Activated CD8-positive, alpha-beta T cell treated with anti-CD3 and anti-CD28 coated beads for 36 hours (primary cell): ENCODE measurements at regions of chr19 and their contacts with region 1.

Region 1: DNA sequence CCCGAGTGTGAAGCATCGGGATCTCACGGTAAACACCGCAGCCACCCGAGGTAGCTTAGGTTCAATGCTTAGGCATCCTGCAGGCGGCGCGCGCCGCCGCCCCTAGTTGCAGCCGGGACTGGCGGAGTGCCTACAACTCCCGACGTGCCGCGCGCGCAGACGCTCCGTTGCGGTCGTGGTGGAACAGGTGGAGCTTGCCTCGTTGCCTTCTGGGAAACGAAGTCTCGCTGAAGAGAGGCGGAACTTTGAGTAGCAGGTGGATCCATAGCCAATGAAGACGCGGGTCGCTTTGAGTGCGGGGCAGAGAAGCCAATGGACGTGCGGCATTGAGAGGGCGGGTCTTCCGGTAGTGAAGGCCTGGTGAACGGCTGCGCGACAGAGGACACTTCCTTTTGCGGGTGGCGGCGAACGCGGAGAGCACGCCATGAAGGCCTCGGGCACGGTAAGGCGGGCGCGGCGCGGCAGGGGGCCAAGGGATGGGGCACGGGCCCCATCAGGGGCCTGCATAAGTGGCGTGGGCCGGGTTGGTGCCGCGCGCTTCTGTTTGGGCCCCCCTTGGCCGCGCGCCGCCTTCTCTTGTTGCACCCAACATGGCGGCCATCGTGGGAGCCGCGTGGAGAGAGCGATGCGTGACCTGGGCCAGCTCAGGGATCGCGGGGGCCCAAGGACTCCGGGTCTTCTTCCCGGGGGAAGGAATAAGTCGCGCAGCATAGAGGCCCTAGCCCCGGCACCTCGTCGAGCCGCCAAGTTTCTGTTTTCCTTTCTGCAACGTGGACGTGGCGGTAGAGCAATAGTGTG is at the start of gene RPL18A:
- DNase-seq: peak; percentile 99
- ATAC-seq: peak; percentile 94
- H3K4me3 Mint-ChIP-seq: peak within 1 kb of the TSS; percentile 82
- H3K27ac Mint-ChIP-seq: peak within 1 kb of the TSS; percentile 97
- H3K4me1 Mint-ChIP-seq: peaks cover 30% of the 10 kb centered on the region
- H3K27me3 Mint-ChIP-seq: no peaks in the 10 kb centered on the region
- CTCF ChIP-seq: peak; percentile 79
- total RNA-seq, gene RPL18A: 3,663 to 3,679 TPM

Region 2: DNA sequence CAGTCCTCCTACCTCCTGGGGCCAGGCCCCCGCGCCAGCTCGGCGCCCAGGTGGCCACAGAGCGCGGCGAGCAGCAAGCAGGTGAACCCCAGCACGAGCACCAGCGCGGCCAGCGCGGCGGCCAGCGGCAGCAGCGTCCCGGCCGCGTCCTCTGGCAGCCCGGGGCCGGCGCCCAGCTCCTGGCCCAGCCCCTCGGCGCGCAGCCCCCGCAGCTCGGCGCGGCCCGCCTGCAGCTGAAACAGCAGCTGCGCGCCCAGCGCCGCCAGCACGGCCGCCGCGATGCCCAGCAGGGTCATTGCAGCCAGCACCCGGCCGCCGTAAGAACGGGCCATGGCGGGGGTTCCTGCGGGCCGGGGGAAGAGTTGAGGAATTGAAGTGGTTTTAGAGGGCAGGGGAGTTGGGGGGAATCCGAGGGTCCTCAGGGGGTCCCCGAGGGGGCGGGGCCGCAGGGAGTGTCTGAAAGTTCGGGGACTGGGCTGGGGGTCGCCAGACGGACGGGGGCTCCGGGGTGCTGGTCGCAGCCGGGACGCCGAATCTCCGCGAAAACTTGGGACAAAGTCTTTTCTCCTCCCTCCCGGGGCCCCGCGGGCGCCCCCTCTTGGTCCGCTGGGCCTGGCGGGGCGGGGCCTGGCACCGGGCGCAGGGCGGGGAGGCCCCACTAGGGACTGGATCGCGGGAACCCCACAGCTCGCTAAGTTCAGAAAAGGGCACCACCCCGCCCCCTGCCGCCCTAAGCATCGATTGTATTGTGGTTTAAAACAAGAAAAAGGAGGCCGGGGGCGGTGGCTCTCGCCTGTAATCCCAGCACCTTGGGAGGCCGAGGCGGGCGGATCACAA is 411.4 kb before region 1 on chr19 and contains the start of gene TMEM221:
- CTCF ChIA-PET with region 1: no interaction called
- POLR2A ChIA-PET with region 1: no interaction called
- intact Hi-C with region 1: no loop called
- DNase-seq: peak; percentile 83
- ATAC-seq: peak; percentile 68
- H3K4me3 Mint-ChIP-seq: peak within 1 kb of the TSS; percentile 25
- H3K27ac Mint-ChIP-seq: no peak within 1 kb of the TSS
- H3K4me1 Mint-ChIP-seq: peaks cover 16% of the 10 kb centered on the region
- H3K27me3 Mint-ChIP-seq: peaks cover 17% of the 10 kb centered on the region
- CTCF ChIP-seq: peak; percentile 74
- total RNA-seq, gene TMEM221: not detected

Region 3: GRCh38 chr19:17703824-17704463 is 155.8 kb before region 1 on chr19:
- CTCF ChIA-PET with region 1: interaction called, 13 read pairs
- POLR2A ChIA-PET with region 1: interaction called, 5 read pairs
- intact Hi-C with region 1: loop called (anchors 5 kb)
- DNase-seq: peak; percentile 85
- ATAC-seq: peak; percentile 99
- H3K4me3 Mint-ChIP-seq: no peak overlapping the region
- H3K27ac Mint-ChIP-seq: no peak overlapping the region
- H3K4me1 Mint-ChIP-seq: no peaks in the 10 kb centered on the region
- H3K27me3 Mint-ChIP-seq: peaks cover 2% of the 10 kb centered on the region
- CTCF ChIP-seq: peak; percentile 96

Region 4: GRCh38 chr19:17803264-17803922 is 56.3 kb before region 1 on chr19:
- CTCF ChIA-PET with region 1: interaction called, 16 read pairs
- POLR2A ChIA-PET with region 1: interaction called, 4 read pairs
- intact Hi-C with region 1: loop called (anchors 10 kb)
- DNase-seq: peak; percentile 27
- ATAC-seq: peak; percentile 29
- H3K4me3 Mint-ChIP-seq: no peak overlapping the region
- H3K27ac Mint-ChIP-seq: peak overlapping the region; percentile 5
- H3K4me1 Mint-ChIP-seq: peaks cover 20% of the 10 kb centered on the region
- H3K27me3 Mint-ChIP-seq: no peaks in the 10 kb centered on the region
- CTCF ChIP-seq: no peak

Region 5: DNA sequence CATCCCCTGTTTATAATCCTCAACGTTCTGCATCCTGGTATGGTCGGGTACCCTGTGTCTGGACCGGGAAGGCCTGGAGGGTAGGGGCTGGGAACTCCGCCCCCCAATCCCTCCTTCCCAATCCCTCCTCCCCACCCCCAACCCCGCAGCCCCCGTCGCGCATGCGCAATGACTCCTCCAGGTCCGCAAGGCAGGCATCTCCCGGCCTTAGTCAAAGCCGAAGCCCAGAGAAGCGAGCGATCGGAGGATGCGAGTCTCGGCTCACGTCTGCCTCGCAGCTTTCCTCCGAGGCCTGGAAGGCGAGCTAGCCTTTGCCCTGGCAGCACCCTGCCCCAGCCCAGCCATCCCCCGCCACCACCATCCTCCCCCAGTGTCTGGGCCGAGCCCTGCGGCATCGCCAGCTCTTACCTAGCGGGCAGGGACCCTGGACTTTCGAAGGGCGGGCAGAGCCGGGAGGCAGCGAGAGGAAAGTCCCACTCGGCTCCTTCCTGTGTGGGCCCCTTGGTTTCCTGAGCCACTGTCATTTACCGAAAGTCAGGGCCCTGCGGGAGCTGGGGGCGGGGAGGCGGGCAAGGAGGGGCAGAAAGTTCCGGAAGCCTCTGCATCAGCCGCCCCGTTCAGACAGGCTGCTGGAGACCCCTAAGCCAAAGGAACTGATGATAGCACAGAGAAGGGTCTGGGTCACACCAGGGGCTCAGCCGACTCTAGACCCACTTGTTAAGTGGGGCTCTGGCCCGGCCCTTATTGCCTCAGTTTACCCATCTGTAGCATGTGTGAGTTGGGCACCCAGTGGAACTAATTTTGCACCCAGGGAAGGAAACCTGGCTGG is 12.0 kb before region 1 on chr19 and contains the start of gene JAK3:
- CTCF ChIA-PET with region 1: interaction called, 39 read pairs
- POLR2A ChIA-PET with region 1: interaction called, 143 read pairs
- intact Hi-C with region 1: no loop called
- DNase-seq: peak; percentile 96
- ATAC-seq: peak; percentile 85
- H3K4me3 Mint-ChIP-seq: peak within 1 kb of the TSS; percentile 85
- H3K27ac Mint-ChIP-seq: peak within 1 kb of the TSS; percentile 93
- H3K4me1 Mint-ChIP-seq: peaks cover 61% of the 10 kb centered on the region
- H3K27me3 Mint-ChIP-seq: no peaks in the 10 kb centered on the region
- CTCF ChIP-seq: no peak
- total RNA-seq, gene JAK3: 120 to 126 TPM

Region 6: DNA sequence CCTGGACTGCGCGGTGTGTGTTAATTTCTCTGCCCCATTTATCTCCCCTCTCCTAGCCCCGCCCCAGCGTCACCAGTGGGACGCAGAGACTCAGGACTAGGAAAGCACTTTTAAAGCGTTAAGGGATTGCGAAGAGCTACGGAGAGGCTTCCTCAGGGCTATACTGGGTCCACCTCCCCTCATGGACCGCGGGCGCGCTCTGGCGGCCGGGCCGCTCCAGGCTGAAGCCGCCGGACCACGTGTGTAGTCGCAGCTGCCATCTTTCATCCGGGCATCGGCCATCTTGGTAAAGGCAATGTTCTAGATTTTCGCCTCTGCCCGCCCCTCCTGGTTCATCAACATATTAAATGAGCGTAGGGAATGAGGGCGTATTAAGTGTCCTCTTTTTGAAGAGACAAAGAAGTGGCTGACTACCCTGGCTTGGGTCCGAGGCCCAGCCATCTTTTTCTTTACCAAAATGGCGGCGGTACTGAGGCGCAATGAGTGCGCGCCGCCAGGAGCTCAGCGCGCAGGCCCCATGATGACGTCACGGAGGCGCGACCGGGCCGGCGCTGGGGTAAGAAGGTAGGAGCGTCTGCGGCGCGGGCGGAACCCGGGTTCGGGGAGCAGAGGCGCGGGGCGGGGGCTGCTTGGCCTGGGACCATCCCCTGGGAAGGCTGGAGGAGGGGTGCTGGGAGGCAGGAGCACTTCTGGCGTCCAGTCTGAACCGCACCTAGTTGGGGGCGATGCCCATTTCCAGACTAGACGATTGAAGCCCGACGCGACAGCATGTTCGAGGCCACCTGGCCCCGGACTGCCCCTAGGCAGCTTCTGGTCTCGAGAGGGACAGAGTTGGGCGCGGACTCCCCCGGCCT is 73.0 kb after region 1 on chr19 and contains the start of gene CCDC124:
- CTCF ChIA-PET with region 1: interaction called, 194 read pairs
- POLR2A ChIA-PET with region 1: interaction called, 123 read pairs
- intact Hi-C with region 1: loop called (anchors 2 kb)
- DNase-seq: peak; percentile 95
- ATAC-seq: peak; percentile 96
- H3K4me3 Mint-ChIP-seq: peak within 1 kb of the TSS; percentile 88
- H3K27ac Mint-ChIP-seq: peak within 1 kb of the TSS; percentile 97
- H3K4me1 Mint-ChIP-seq: peaks cover 24% of the 10 kb centered on the region
- H3K27me3 Mint-ChIP-seq: no peaks in the 10 kb centered on the region
- CTCF ChIP-seq: peak; percentile 85
- total RNA-seq, gene CCDC124: 120 to 129 TPM

Region 7: GRCh38 chr19:18000935-18001778 is 141.4 kb after region 1 on chr19:
- CTCF ChIA-PET with region 1: interaction called, 15 read pairs
- POLR2A ChIA-PET with region 1: interaction called, 14 read pairs
- intact Hi-C with region 1: loop called (anchors 5 kb)
- DNase-seq: peak; percentile 98
- ATAC-seq: peak; percentile 86
- H3K4me3 Mint-ChIP-seq: peak overlapping the region; percentile 90
- H3K27ac Mint-ChIP-seq: peak overlapping the region; percentile 98
- H3K4me1 Mint-ChIP-seq: peaks cover 18% of the 10 kb centered on the region
- H3K27me3 Mint-ChIP-seq: no peaks in the 10 kb centered on the region
- CTCF ChIP-seq: no peak